Cardiac septum (tissue), 1 donor: ENCODE measurements at regions of chr2 and their contacts with region 1.

Region 1: DNA sequence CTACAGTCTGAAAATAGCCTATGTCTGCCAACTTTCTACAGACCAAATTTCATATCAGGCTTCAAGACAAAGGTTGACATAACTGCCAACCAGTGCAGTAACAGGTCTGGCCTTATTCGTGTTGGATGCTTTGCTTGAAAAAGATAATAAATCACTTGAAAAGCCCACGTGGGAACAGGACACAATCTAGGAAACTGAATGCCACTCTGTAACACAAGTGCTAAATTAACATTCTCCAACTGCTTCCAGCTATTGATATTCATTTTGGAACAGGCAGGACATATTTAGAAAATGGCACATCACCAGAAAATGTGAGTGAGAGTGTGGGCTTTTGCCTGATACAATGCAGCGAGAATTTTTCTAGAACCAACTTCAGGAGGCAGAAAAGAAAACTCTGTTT is 165.9 kb upstream of the CCDC150 start:
- DNase-seq: no peak

Region 2: GRCh38 chr2:196059491-196059960 is 414.1 kb before region 1 on chr2:
- intact Hi-C with region 1: no loop called
- DNase-seq: no peak

Region 3: DNA sequence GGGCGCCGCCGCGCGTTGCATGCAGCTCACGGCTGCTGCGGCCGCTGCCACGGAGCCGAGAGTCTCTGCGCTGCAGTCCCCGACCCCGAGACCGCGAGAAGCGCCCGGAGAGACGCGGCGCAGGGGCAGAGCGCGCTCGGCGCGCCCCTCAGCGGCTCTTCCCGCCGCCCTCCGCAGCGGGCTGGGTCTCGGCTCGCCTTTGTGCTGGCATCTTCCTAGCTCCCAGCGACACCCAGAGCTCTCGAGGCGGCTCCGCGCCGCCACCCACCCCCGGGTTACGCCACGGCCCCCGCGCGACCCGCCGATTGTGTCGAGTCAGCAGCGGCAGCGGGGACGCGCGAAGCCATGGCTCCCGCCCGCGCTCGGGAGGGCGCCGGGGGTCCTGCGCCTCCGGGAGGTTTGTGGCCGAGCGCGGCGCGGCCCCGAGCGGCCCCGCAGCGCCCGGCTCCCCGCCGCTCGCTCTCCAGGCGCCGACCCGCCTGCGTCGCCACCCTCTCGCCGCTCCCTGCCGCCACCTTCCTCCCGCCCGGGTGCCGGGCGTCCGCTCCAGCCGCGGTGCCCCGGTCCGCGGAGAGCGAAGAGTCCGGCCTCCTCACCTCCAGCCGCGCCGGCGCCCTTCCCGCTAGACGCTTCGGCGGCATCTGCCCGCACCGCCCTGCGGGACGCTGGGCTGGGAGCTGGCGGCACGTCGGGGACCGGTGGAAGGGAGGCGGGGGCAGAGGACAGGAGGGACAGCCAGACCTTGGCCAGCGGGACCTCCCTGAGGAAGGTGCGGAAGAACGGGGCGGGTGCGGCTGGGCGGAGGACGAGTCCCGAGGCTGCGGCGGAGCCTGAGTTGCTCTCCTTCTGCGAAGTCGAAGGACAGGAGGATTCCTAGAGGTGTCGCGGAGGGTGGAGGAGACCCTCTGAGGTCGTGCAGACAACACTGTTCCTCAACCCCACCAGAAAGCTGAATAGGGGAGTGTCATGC is 119.6 kb after region 1 on chr2:
- intact Hi-C with region 1: loop called (anchors 5 kb)
- DNase-seq: peak; percentile 77

Region 4: DNA sequence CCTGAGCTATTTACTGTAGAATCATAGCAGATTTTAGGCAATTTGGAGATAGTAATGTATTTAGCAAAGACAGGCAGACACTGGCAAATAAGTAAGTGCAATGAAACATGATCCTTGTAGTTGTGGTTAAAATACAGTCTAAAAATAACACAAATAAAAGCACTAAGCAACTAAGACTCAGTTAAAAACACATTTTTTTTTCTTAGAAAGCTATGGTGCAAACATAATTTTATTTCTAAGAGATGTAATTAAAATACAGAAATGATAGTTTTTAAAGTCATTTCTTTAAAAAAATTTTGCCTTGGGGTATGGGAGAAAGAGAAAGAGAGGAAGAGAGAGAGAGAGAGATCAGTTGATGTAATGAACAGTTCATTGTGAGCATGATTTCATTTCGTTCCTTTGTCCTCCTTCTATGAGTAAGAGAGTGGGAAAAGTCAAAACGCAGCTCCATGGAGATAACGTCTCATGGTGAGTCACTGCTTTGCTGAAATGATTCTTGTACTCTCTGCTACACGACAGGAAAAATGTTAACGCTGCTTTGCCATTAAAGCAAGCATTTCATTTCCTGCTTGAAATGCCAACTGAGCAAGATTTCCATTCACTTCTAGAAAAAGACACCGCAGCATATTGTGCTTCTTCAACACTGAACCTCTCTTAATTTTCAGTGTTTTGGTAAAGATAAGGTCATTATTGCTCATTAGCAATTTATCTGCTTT is 514.2 kb after region 1 on chr2:
- intact Hi-C with region 1: no loop called
- DNase-seq: no peak